A549 (cell line): ENCODE measurements at regions of chr17 and their contacts with region 1.

Region 1: DNA sequence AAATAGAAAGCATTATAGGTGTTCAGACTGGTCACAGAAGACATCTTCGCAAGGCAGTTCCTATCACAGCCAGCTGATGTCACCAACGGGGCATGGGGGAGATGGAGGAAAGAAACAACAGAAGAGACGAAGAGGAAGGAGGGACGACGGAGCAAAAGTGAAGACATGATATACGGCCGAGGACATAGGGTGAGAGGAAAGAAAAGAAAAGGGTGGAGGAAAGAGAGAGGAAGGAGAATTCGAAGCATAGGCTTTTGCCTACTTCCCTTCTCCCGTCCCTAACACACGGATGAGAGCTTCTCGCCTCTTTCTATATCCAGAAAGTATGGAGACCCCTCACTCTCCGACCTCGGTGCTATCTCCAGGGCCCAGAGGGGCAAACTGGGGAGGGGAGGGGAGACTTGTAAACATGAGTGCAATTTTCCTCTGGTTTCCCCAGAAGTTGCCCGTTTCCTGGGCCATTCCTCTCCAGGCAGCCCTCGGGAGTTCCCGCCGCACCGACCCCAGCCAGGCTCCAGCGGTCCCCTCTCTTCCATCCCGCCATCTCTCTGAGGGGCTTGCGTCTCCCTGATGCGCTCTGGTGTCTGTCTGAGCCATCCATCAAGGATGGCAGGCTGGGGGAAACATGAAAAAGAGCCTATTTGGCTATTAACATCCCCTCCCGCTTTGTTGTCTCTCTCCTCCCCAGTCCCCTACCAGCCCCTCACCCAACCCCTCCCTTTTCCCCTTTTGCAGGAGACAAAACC is 26.0 kb downstream of the COPZ2 start:
- DNase-seq: peak; percentile 66 to 78
- ATAC-seq: peak; percentile 83 to 87
- H3K4me3 ChIP-seq: no peak overlapping the region
- H3K27ac ChIP-seq: peak overlapping the region; percentile 10 to 34; a peak in 5 of 6 replicates
- H3K4me1 ChIP-seq: 0 out of 3 replicates have a peak, but pooled peaks cover 3% of the 10 kb centered on the region
- CTCF ChIP-seq: peak; percentile 39; the same call in 2 of the 3 replicates
- EP300 ChIP-seq: no peak
- POLR2A ChIP-seq: no peak
- RAD21 ChIP-seq: peak; percentile 23 to 61; a peak in 3 of 5 replicates

Region 2: DNA sequence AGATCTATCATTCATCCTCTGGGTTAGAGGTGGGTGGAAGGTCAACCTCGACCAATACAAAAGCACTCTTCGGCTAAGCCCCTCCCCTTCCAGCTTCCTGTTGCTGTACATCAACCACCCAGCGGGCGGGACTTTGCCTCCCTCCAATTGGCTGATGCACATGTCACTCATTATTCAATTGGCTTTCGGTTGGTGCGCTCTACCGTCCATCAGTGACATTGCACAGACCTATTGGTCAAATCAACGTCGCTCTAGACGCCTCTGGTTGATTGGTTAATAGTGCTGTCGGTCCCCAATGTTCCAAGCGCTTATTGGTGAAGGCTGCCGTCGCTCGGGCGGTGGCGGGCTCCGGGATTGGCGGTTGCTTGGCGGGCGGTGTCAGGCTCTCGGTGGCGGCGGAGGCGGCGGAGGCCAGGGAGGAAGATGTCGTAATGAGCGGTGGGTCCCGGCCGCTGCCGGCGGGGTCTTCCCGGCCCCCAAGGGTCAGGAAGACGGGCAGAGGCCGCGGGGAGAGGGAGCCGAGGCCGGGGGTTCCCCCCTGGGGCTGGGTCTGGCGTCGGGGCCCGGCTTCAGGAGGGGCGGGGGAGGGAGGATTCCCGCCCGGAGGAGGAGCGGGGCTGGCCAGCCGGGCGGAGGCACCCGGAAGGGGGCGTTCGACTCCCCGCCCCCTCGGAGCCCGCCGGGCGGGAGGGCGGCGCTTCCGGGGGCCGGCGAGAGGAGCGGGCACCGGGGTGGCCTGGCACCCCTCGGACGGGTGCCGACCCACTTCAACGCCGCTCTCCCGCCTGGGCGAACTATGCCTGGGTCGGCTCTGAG is 115.5 kb before region 1 on chr17 and contains the start of gene SP2:
- CTCF ChIA-PET with region 1: interaction called, 96 read pairs
- POLR2A ChIA-PET with region 1: no interaction called
- DNase-seq: peak; percentile 100
- ATAC-seq: peak; percentile 88 to 95
- H3K4me3 ChIP-seq: peak within 1 kb of the TSS; percentile 86
- H3K27ac ChIP-seq: peak within 1 kb of the TSS; percentile 95 to 96
- H3K4me1 ChIP-seq: peaks cover 16% of the 10 kb centered on the region; the same call in 2 of the 3 replicates
- CTCF ChIP-seq: no peak
- EP300 ChIP-seq: no peak
- POLR2A ChIP-seq: peak; percentile 91
- RAD21 ChIP-seq: no peak
- polyA plus RNA-seq, gene SP2: 6.2 and 8.0 TPM in 2 replicates

Region 3: GRCh38 chr17:47995241-47995935 is 16.2 kb before region 1 on chr17:
- CTCF ChIA-PET with region 1: interaction called, 766 read pairs
- POLR2A ChIA-PET with region 1: no interaction called
- DNase-seq: no peak
- ATAC-seq: no peak
- H3K4me3 ChIP-seq: no peak overlapping the region
- H3K27ac ChIP-seq: no peak overlapping the region
- H3K4me1 ChIP-seq: no peaks in the 10 kb centered on the region
- CTCF ChIP-seq: no peak
- EP300 ChIP-seq: no peak
- POLR2A ChIP-seq: no peak
- RAD21 ChIP-seq: no peak

Region 4: GRCh38 chr17:48037036-48037837 is 25.7 kb after region 1 on chr17 and contains the start of gene COPZ2:
- CTCF ChIA-PET with region 1: interaction called, 10 read pairs
- POLR2A ChIA-PET with region 1: no interaction called
- DNase-seq: peak; percentile 71 to 85
- ATAC-seq: peak; percentile 94 to 95
- H3K4me3 ChIP-seq: peak within 1 kb of the TSS; percentile 63
- H3K27ac ChIP-seq: peak within 1 kb of the TSS; percentile 74 to 91
- H3K4me1 ChIP-seq: 0 out of 3 replicates have a peak, but pooled peaks cover 3% of the 10 kb centered on the region
- CTCF ChIP-seq: peak; percentile 70
- EP300 ChIP-seq: no peak
- POLR2A ChIP-seq: peak; percentile 28
- RAD21 ChIP-seq: 0 out of 5 replicates have a peak, but pooled peaks have one; percentile 17 to 36
- polyA plus RNA-seq, gene COPZ2: 19.1 and 19.3 TPM in 2 replicates

Region 5: DNA sequence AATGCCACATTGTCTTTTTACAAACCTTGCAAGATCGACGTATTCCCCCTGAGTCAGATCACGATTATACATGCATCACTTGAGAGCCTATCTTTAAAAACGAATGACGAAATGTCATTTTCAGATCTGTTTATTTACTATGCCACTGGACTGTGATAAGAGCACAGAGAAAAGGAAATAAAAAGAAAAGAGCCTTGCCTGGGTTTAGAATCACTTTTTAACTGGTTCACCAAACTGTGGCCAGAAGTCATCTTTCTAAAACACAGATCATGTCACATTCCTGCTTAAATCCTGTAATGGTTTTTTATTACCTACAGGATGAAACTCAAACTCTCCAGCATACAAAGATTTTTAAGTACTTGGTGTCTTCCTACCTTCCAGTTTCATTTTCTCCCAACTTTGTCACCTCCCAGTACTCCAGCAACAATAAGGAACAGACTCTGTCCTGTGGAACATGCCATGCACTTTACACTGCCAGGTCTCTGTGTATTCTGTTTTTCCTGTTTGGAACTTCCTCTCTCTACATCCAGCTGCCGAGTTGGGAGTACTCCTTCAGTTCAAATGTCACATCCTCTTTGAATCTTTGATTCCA is 187.5 kb after region 1 on chr17:
- CTCF ChIA-PET with region 1: no interaction called
- POLR2A ChIA-PET with region 1: no interaction called
- DNase-seq: no peak
- ATAC-seq: peak in 1 of 2 experiments; percentile 59; a peak in 3 of 6 replicates
- H3K4me3 ChIP-seq: no peak overlapping the region
- H3K27ac ChIP-seq: no peak overlapping the region
- H3K4me1 ChIP-seq: peaks cover 10% of the 10 kb centered on the region
- CTCF ChIP-seq: no peak
- EP300 ChIP-seq: no peak
- POLR2A ChIP-seq: no peak
- RAD21 ChIP-seq: no peak